ENCODE measurements at regions of chr9 and their contacts with region 1.

Region 1: GRCh38 chr9:36053971-36054370 is 17.3 kb downstream of the RECK start:
- DNase-seq: no peak
- ATAC-seq: peak; percentile 51; the same call in 1 of the 2 replicates
- H3K4me3 ChIP-seq: no peak overlapping the region
- H3K27ac ChIP-seq: no peak overlapping the region
- H3K4me1 ChIP-seq: no peaks in the 10 kb centered on the region
- H3K27me3 ChIP-seq: no peaks in the 10 kb centered on the region
- CTCF ChIP-seq: no peak

Region 2: DNA sequence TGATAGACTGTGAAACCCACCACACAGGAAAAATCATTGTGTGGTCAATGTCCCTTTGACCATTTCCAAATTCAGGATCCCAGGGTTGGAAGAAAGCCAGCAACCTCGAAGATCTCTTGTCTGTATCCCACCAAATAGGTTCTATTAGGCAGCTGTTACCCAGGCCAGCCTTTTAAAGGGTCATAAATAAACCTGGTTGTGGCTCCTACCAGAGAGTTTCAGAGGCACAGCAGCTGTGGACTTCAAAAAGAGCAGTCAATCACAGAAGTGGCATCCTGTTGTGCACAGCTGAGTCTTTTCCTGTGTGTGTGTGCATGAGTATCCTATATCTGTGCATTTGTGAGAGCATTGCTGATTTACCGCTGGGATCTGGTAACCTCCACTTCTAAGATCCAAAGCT is 72.3 kb before region 1 on chr9:
- CTCF ChIA-PET with region 1: no interaction called
- POLR2A ChIA-PET with region 1: no interaction called
- in situ Hi-C with region 1: loop called (anchors 10 kb)
- intact Hi-C with region 1: no loop called
- DNase-seq: no peak
- ATAC-seq: no peak
- H3K4me3 ChIP-seq: no peak overlapping the region
- H3K27ac ChIP-seq: no peak overlapping the region
- H3K4me1 ChIP-seq: no peaks in the 10 kb centered on the region
- H3K27me3 ChIP-seq: peaks cover 81% of the 10 kb centered on the region
- CTCF ChIP-seq: no peak

Region 3: GRCh38 chr9:36092509-36093215 is 38.7 kb after region 1 on chr9:
- CTCF ChIA-PET with region 1: no interaction called
- POLR2A ChIA-PET with region 1: no interaction called
- in situ Hi-C with region 1: no loop called
- intact Hi-C with region 1: no loop called
- DNase-seq: no peak
- ATAC-seq: no peak
- H3K4me3 ChIP-seq: no peak overlapping the region
- H3K27ac ChIP-seq: no peak overlapping the region
- H3K4me1 ChIP-seq: no peaks in the 10 kb centered on the region
- H3K27me3 ChIP-seq: no peaks in the 10 kb centered on the region
- CTCF ChIP-seq: no peak